Lower leg skin (tissue), 4 donors: ENCODE measurements at regions of chr11 and their contacts with region 1.

Region 1: GRCh38 chr11:130069684-130070108 is at the start of gene APLP2:
- DNase-seq: peak; percentile 99 to 100
- H3K4me3 ChIP-seq: peak within 1 kb of the TSS; percentile 88
- CTCF ChIP-seq: no peak
- POLR2A ChIP-seq: peak in 1 of 2 donors; percentile 65
- total RNA-seq, gene APLP2: 125 to 226 (median 158) TPM

Region 2: DNA sequence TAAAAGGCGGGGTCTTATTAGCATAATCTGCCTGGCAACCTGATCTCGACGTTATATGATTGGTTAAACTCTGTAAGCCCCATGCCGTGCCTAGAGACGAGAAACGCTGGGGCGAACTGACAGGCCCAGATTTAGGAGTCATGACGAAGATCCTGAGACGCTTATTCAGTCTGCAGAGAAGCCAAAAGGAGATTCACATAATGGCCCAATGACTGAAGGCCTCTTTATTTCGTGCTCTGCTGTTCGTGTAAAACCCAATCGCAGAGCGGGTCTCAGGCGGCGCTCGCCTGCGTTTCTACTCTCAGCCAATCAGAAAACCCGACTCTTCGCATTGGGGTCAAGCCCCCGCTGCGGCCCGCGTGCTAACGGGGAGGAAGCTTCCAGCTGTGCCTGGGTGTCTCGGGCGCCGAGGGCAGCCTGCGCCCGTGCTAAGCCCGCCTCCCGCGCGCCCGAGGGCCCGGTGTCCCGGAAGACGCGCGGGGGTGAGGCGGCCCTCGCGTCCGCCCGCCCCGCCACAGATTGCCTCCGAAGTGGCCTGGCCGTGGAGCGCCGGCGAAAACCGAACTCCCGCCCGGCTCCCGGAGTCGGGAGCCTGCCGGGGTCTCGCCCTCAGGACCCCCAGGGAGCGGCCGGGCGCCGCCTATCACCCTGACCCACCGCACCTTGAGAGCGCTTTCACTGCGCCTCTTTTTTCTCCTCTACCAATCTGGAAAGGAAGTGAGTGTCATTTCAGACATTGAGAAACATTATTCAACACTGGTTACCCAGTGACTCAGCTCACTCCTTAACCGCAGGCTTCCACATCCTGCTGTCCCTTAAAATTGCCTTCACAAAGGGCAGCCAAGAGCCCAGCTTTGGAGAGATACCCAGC is 66.6 kb before region 1 on chr11:
- intact Hi-C with region 1: loop called (anchors 10 kb)
- DNase-seq: peak; percentile 95 to 98
- H3K4me3 ChIP-seq: peak overlapping the region; percentile 72
- CTCF ChIP-seq: no peak
- POLR2A ChIP-seq: peak in 1 of 2 donors; percentile 50